Activated B cell treated with CpG ODN at 0.5 μM for 24 hours (primary cell): ENCODE measurements at regions of chr6 and their contacts with region 1.

Region 1: DNA sequence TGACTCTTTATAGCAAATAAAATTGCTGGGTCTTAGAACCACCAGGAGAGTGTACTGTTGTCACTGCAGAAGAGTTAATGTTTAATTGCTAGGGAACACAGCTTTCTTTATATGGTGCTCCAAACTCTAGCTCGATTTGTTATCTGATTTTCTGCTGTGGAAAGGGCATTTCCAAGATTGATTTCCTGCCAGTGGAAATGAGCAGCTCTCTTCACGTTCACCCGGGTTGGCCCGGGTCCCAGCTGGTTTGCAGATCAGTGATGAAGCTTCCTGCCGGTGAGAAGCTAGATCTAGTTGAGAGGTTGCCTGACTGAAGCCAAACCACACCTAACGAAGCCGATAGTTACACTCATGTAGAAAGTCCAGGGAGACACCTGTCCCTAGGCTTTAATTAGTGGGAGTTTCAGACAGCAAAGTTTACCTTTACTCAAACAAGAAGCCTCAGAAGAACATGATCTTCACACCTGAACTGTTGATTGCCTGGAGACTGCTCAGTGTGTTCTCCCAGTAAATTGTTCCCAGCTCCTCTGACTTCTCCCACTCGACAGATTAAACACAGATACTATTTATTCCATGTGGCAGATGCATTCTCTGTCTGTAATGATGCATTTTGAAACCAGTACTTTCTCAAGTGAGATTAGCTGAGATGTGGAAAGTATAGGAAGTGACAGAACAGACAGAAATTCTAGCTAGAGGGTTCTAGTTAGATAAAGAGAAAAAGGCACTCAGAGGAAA is 27.8 kb downstream of the PAQR8 start:
- DNase-seq: no peak
- ATAC-seq: peak; percentile 26
- H3K4me3 Mint-ChIP-seq: peak overlapping the region; percentile 49
- H3K27ac Mint-ChIP-seq: peak overlapping the region; percentile 59
- H3K4me1 Mint-ChIP-seq: peaks cover 43% of the 10 kb centered on the region
- H3K27me3 Mint-ChIP-seq: no peaks in the 10 kb centered on the region
- CTCF ChIP-seq: no peak

Region 2: DNA sequence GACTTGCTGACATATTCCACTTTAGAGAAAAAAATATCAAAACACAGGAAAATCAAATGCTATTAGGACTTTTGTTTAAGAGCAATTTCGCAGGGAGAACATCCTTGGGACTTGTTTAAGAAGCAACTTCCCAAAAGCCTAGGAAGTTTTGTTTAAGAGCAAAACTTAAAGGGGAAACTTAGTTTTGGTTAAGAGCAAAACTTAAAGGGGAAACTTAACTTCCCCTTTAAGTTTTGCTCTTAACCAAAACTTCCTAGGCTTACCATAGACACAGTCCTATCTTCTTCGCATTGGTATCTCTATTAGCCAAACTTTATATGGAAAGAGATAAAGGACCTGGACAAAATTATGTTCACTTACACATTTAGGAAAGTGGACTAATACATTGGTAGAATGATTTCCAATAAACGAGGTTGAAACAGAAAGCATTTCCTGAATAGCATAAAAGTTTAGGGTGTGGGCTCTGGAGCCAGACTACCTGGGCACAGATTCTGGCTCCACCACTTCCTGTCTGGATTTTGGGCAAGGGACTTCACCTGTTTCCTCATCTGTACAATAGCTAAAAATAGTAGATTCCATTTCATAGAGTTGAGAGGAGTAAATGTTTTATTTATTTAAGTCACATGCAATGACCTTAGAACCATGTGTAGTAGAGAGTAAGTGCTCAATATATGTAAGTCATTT is 12.1 kb before region 1 on chr6:
- CTCF ChIA-PET with region 1: no interaction called
- POLR2A ChIA-PET with region 1: interaction called, 5 read pairs
- intact Hi-C with region 1: loop called (anchors 1 kb)
- DNase-seq: no peak
- ATAC-seq: no peak
- H3K4me3 Mint-ChIP-seq: peak overlapping the region; percentile 44
- H3K27ac Mint-ChIP-seq: peak overlapping the region; percentile 72
- H3K4me1 Mint-ChIP-seq: peaks cover 30% of the 10 kb centered on the region
- H3K27me3 Mint-ChIP-seq: no peaks in the 10 kb centered on the region
- CTCF ChIP-seq: no peak